ENCODE measurements at regions of chr1 and their contacts with region 1.

Region 1: GRCh38 chr1:145858894-145859490 is at the start of gene PIAS3:
- DNase-seq: peak; percentile 88
- H3K4me3 Mint-ChIP-seq: peak within 1 kb of the TSS; percentile 94
- H3K27ac Mint-ChIP-seq: peak within 1 kb of the TSS; percentile 93
- H3K4me1 Mint-ChIP-seq: peaks cover 20% of the 10 kb centered on the region
- H3K27me3 Mint-ChIP-seq: peaks cover 7% of the 10 kb centered on the region
- total RNA-seq, gene PIAS3: 16.9 and 17.0 TPM in 2 replicates

Region 2: GRCh38 chr1:145885738-145886287 is 26.8 kb after region 1 on chr1 and contains the start of gene ANKRD35:
- intact Hi-C with region 1: loop called (anchors 1 kb)
- DNase-seq: peak; percentile 84
- H3K4me3 Mint-ChIP-seq: peak within 1 kb of the TSS; percentile 78
- H3K27ac Mint-ChIP-seq: no peak within 1 kb of the TSS
- H3K4me1 Mint-ChIP-seq: peaks cover 25% of the 10 kb centered on the region
- H3K27me3 Mint-ChIP-seq: peaks cover 35% of the 10 kb centered on the region
- total RNA-seq, gene ANKRD35: 0.37 and 0.52 TPM in 2 replicates

Region 3: GRCh38 chr1:145918144-145918992 is 59.4 kb after region 1 on chr1 and contains the start of gene PEX11B:
- intact Hi-C with region 1: loop called (anchors 1 kb)
- DNase-seq: peak; percentile 87
- H3K4me3 Mint-ChIP-seq: peak within 1 kb of the TSS; percentile 88
- H3K27ac Mint-ChIP-seq: peak within 1 kb of the TSS; percentile 91
- H3K4me1 Mint-ChIP-seq: peaks cover 41% of the 10 kb centered on the region
- H3K27me3 Mint-ChIP-seq: no peaks in the 10 kb centered on the region
- total RNA-seq, gene PEX11B: 30.6 and 31.2 TPM in 2 replicates

Region 4: GRCh38 chr1:145927063-145927886 is 68.3 kb after region 1 on chr1 and contains the start of gene RBM8A:
- intact Hi-C with region 1: loop called (anchors 1 kb)
- DNase-seq: peak; percentile 93
- H3K4me3 Mint-ChIP-seq: no peak within 1 kb of the TSS
- H3K27ac Mint-ChIP-seq: peak within 1 kb of the TSS; percentile 20
- H3K4me1 Mint-ChIP-seq: peaks cover 11% of the 10 kb centered on the region
- H3K27me3 Mint-ChIP-seq: no peaks in the 10 kb centered on the region
- total RNA-seq, gene RBM8A: 331 and 354 TPM in 2 replicates

Measured in activated T-helper 1 cell treated with anti-CD3 and anti-CD28 coated beads, Interleukin-12 subunit alpha, Interleukin-12 subunit beta, Interleukin-2, Interleukin-4 antibody, amounts not matched to agents 30 ng/mL and 10 ng/mL and 1 ng/mL, durations not matched to agents 14 hours and 24 hours and 36 hours (primary cell).